Posterior vena cava (tissue), 2 donors: ENCODE measurements at regions of chr18 and their contacts with region 1.

Region 1: DNA sequence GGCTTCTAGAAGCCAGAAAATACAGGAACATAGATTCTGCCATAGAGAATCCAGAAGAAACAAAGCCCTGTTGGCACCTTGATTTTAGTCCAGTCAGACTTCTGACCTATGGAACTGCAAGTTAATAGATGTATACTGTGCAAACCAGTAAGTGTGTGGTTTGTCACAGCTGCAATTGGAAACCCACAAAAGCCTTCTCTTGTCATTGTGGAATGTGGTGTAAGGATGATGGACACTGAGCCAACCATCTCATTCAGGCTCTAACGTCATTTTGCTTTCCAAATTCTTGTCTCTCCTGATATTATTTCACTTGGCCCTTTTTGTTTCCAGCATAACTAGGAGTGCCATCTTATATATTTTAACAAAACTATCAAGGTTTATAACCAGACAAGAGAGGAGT is 369.5 kb upstream of the SMIM21 start:
- DNase-seq: no peak

Region 2: DNA sequence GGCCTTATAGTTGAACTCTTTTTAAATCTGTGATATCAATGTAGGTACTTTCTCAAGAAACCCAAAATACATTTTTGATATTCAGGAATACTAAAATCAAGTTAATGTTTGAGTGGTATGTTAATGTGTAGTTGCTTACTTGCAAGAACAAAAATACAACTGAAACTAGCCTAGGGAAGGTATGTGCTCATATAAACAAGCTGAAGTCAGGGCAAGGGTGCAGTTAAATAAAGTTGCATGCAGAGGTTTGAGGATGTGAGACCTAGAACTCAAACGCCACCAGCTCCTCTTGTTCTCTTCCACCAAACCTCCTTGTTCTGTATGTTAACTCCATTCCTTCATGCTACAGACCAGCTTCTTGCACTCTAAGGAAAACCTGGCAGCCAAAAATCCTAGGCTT is 18.7 kb after region 1 on chr18:
- intact Hi-C with region 1: loop called in 1 of 2 experiments (anchors 1 kb)
- DNase-seq: no peak

Region 3: GRCh38 chr18:76275727-76276313 is 478.8 kb after region 1 on chr18:
- intact Hi-C with region 1: no loop called
- DNase-seq: no peak